A673 (cell line): ENCODE measurements at regions of chr11 and their contacts with region 1.

Region 1: DNA sequence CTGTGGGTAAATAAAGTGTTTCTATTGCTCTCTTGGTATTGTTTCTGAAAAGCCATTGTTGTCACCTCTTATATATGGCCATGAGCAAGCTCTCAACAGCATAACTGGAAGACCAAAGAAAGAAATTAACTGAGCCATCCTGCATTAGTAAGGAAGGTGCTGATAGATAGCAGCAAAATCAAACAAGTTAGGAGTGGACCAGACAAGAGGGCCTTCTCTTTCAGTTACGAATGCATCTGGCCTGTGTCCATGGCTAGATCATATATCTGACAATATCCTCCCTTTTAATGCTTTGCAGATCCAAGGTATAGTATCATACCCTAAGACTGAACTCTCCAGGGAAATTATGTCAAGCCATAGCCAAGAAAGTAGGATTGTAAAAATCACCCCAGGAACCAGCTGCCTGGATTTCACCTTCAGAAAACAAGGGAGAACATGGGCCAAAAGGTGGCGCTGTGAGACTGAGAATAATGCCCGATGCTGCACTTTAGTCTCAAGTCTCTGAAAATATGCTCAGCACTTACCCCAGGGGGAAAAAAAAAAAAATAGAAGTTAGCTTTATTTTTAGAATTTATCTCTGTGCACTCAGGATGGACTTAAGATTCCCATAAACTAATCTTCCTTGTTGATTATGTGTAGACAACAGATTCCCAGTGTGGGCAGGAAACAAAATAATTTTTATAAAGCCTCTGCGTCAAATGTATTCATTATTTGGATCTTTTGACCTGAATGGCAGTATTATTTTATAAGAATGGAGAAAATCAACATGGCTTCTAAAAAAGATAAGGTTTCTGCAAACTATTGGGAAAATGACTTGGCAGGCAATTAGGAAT is 415.1 kb downstream of the ETS1 start:
- DNase-seq: peak; percentile 88
- H3K4me3 ChIP-seq: no peak overlapping the region
- H3K27ac ChIP-seq: no peak overlapping the region
- H3K4me1 ChIP-seq: peaks cover 9% of the 10 kb centered on the region
- H3K27me3 ChIP-seq: peaks cover 23% of the 10 kb centered on the region
- CTCF ChIP-seq: peak; percentile 91

Region 2: GRCh38 chr11:127656116-127656836 is 516.0 kb before region 1 on chr11:
- CTCF ChIA-PET with region 1: no interaction called
- POLR2A ChIA-PET with region 1: no interaction called
- intact Hi-C with region 1: no loop called
- DNase-seq: no peak
- H3K4me3 ChIP-seq: no peak overlapping the region
- H3K27ac ChIP-seq: no peak overlapping the region
- H3K4me1 ChIP-seq: no peaks in the 10 kb centered on the region
- H3K27me3 ChIP-seq: no peaks in the 10 kb centered on the region
- CTCF ChIP-seq: no peak

Region 3: DNA sequence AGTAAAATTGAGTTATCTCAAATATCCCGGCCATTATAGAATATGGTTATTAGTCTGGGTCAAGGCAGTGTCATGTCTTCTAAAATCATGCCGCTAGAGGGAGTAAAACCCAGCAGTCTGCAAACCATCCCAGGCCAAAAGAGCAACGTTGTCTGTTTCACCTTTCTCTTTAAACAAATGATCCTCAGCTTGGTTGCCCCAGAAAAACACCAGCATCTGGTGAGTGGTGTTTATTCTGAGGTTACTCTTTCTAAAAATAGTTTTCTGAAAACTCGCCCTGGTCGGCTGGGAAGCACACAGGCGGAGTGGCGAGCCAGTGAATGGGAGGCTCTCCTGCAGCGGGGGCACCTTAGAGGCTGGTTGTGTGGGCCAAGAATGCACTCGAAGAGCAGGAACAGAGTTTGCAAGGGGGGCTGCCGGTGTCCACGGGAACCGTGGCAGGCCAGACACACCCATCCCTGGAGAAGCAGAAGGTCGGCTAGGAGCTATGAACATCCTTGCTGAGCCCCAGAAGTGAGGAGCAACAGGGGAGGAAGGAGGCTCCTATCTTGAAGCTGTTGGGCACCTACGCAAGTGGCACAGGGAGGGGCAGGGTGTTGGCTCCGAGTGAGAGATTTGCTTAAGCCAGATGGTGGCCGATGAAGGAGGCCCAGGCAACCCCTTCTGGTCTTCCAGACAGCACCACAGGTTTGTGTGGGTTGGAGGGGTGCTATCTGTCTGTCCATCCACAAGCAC is 118.0 kb after region 1 on chr11:
- CTCF ChIA-PET with region 1: interaction called, 4 read pairs
- POLR2A ChIA-PET with region 1: no interaction called
- intact Hi-C with region 1: loop called (anchors 2 kb)
- DNase-seq: peak; percentile 65
- H3K4me3 ChIP-seq: no peak overlapping the region
- H3K27ac ChIP-seq: no peak overlapping the region
- H3K4me1 ChIP-seq: no peaks in the 10 kb centered on the region
- H3K27me3 ChIP-seq: peaks cover 76% of the 10 kb centered on the region
- CTCF ChIP-seq: peak; percentile 89

Region 4: DNA sequence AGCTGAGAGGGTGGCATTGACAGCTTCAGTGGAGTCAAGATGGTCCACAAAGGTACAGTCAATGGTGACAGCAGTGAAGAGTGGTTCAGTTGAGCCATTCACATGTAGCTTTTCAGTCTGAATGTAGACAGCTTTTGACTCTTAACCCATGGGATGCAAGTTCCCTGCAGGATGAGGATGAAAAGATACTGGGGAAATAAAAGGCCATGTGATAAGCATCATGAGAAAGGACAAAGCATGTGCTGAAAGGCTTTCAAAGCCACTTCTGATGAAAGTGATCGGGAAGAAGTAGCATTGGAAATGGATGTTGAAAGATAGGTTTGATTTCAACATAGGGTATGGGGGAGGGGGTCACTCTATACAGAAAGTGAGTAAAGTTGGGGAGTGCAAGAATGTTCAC is 232.2 kb after region 1 on chr11:
- CTCF ChIA-PET with region 1: interaction called, 3 read pairs
- POLR2A ChIA-PET with region 1: interaction called, 14 read pairs
- intact Hi-C with region 1: no loop called
- DNase-seq: no peak
- H3K4me3 ChIP-seq: no peak overlapping the region
- H3K27ac ChIP-seq: no peak overlapping the region
- H3K4me1 ChIP-seq: no peaks in the 10 kb centered on the region
- H3K27me3 ChIP-seq: peaks cover 21% of the 10 kb centered on the region
- CTCF ChIP-seq: no peak

Region 5: GRCh38 chr11:128776424-128777284 is 604.4 kb after region 1 on chr11:
- CTCF ChIA-PET with region 1: no interaction called
- POLR2A ChIA-PET with region 1: no interaction called
- intact Hi-C with region 1: loop called (anchors 5 kb)
- DNase-seq: peak; percentile 47
- H3K4me3 ChIP-seq: no peak overlapping the region
- H3K27ac ChIP-seq: no peak overlapping the region
- H3K4me1 ChIP-seq: no peaks in the 10 kb centered on the region
- H3K27me3 ChIP-seq: peaks cover 16% of the 10 kb centered on the region
- CTCF ChIP-seq: peak; percentile 58

Region 6: GRCh38 chr11:128859563-128860441 is 687.5 kb after region 1 on chr11:
- CTCF ChIA-PET with region 1: interaction called, 4 read pairs
- POLR2A ChIA-PET with region 1: no interaction called
- intact Hi-C with region 1: loop called (anchors 5 kb)
- DNase-seq: peak; percentile 79
- H3K4me3 ChIP-seq: no peak overlapping the region
- H3K27ac ChIP-seq: no peak overlapping the region
- H3K4me1 ChIP-seq: peaks cover 5% of the 10 kb centered on the region
- H3K27me3 ChIP-seq: no peaks in the 10 kb centered on the region
- CTCF ChIP-seq: peak; percentile 100

Region 7: GRCh38 chr11:128893578-128894285 is 721.5 kb after region 1 on chr11:
- CTCF ChIA-PET with region 1: no interaction called
- POLR2A ChIA-PET with region 1: no interaction called
- intact Hi-C with region 1: no loop called
- DNase-seq: no peak
- H3K4me3 ChIP-seq: no peak overlapping the region
- H3K27ac ChIP-seq: no peak overlapping the region
- H3K4me1 ChIP-seq: peaks cover 4% of the 10 kb centered on the region
- H3K27me3 ChIP-seq: peaks cover 14% of the 10 kb centered on the region
- CTCF ChIP-seq: no peak